OCI-LY7 (cell line): ENCODE measurements at regions of chr21 and their contacts with region 1.

Region 1: DNA sequence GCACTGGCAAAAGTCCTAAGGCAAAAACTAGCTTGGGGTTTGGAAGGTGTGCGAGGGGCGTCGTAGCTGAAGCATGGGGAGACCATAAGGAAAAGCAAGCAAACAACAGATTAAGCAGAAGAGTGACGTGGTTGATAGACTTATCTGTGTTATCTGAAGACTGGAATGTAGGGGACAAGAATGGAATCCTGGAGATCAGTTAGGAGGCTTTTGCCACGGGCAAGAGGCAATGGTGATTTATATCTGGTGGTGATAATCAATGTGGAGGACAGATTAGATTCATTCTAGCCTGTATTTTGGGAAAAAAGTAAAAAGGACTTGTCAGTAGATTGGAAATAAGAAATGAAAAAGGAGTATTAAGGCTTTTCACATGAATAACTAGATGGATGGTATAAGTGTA is 97.4 kb downstream of the ITSN1 start:
- DNase-seq: no peak
- H3K4me3 ChIP-seq: no peak overlapping the region
- H3K27ac ChIP-seq: no peak overlapping the region
- H3K4me1 ChIP-seq: no peaks in the 10 kb centered on the region
- CTCF ChIP-seq: no peak

Region 2: DNA sequence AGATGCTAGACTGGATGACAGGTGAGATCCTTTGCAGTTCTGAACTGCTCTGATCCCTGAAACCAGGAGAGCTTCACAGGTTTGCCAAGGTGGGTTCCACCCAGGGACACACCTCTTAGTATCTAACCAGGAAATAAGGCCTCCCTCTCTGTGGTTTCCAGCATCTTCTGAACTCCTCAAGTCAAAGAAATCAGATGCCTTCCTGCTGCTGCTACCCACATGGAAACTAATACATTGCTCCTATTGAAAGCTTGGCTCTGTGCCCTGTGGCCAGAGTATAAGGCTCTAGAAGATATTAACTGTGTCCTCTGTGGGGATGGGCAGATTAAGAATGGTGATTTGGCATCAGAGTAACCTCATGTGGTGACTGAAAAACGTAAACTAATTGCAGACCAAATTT is 258.7 kb after region 1 on chr21:
- CTCF ChIA-PET with region 1: no interaction called
- POLR2A ChIA-PET with region 1: interaction called, 12 read pairs
- intact Hi-C with region 1: no loop called
- DNase-seq: no peak
- H3K4me3 ChIP-seq: no peak overlapping the region
- H3K27ac ChIP-seq: no peak overlapping the region
- H3K4me1 ChIP-seq: peaks cover 13% of the 10 kb centered on the region
- CTCF ChIP-seq: no peak